ENCODE measurements at regions of chr14 and their contacts with region 1.

Region 1: GRCh38 chr14:22556990-22557623 is 31.9 kb downstream of the DAD1 start:
- DNase-seq: peak; percentile 87
- H3K4me3 Mint-ChIP-seq: peak overlapping the region; percentile 81
- H3K27ac Mint-ChIP-seq: peak overlapping the region; percentile 98
- H3K4me1 Mint-ChIP-seq: peaks cover 88% of the 10 kb centered on the region
- H3K27me3 Mint-ChIP-seq: peaks cover 3% of the 10 kb centered on the region

Region 2: DNA sequence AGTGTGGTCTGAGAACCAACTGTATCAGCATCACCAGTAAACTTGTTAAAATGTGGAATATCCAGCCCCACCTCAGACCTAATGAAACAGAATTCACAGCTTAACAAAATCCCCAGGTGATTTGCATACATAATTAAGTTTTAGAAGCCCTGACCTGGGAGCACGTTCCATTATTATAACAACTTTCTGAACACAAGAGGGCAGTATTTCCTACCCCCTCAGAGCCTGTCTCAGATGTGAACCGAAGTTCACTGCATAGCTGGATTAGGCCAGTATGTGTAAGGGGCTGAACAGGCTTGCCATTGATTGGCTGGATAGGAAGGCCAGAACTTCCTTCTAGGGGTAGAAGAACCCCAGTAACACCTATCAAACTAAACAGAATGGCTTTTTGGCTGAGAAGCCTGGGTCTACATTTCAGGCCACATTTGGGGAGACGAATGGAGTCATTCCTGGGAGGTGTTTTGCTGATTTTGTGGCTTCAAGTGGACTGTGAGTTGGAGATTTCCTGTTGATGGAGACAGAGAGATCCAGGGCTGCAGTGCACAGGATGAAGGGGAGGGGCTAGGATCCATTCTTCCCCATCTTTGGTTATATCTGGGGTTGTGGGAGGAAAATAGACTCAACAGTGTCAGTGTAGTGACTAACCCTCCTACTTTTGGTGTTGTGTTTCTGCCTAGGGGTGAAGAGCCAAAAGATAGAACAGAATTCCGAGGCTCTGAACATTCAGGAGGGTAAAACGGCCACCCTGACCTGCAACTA is 788.8 kb before region 1 on chr14:
- intact Hi-C with region 1: loop called (anchors 5 kb)
- DNase-seq: no peak
- H3K4me3 Mint-ChIP-seq: peak overlapping the region; percentile 67
- H3K27ac Mint-ChIP-seq: peak overlapping the region; percentile 6
- H3K4me1 Mint-ChIP-seq: peaks cover 4% of the 10 kb centered on the region
- H3K27me3 Mint-ChIP-seq: peaks cover 10% of the 10 kb centered on the region

Region 3: DNA sequence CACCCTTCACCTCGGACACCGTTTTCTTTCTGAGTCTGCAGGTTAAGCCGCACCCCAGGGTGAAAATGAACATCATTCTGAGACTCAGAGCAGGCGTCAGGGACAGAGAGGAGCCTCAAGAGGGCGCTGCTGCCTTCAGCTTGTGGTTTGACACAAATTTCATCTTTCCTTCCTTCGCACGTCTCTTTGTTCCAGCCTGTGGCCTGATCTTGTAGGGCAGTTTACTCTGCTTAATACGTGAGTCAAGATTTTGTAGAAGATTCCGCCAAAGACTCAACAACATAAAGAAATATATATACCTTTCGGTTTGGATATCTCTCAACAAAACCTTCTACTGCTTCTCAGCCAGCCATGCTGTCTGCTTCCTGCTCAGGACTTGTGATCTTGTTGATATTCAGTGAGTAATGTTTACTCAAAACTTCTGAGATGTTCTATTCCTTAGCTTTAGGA is 554.2 kb before region 1 on chr14:
- intact Hi-C with region 1: loop called (anchors 5 kb)
- DNase-seq: peak; percentile 66
- H3K4me3 Mint-ChIP-seq: peak overlapping the region; percentile 74
- H3K27ac Mint-ChIP-seq: peak overlapping the region; percentile 86
- H3K4me1 Mint-ChIP-seq: peaks cover 32% of the 10 kb centered on the region
- H3K27me3 Mint-ChIP-seq: no peaks in the 10 kb centered on the region

Region 4: GRCh38 chr14:22221508-22221907 is 335.6 kb before region 1 on chr14:
- intact Hi-C with region 1: loop called (anchors 10 kb)
- DNase-seq: no peak
- H3K4me3 Mint-ChIP-seq: peak overlapping the region; percentile 68
- H3K27ac Mint-ChIP-seq: peak overlapping the region; percentile 38
- H3K4me1 Mint-ChIP-seq: peaks cover 9% of the 10 kb centered on the region
- H3K27me3 Mint-ChIP-seq: no peaks in the 10 kb centered on the region

Region 5: GRCh38 chr14:22570132-22570949 is 13.2 kb after region 1 on chr14:
- intact Hi-C with region 1: loop called (anchors 1 kb)
- DNase-seq: peak; percentile 87
- H3K4me3 Mint-ChIP-seq: peak overlapping the region; percentile 89
- H3K27ac Mint-ChIP-seq: peak overlapping the region; percentile 96
- H3K4me1 Mint-ChIP-seq: peaks cover 70% of the 10 kb centered on the region
- H3K27me3 Mint-ChIP-seq: no peaks in the 10 kb centered on the region

Region 6: GRCh38 chr14:22641846-22642245 is 84.7 kb after region 1 on chr14:
- intact Hi-C with region 1: no loop called
- DNase-seq: no peak
- H3K4me3 Mint-ChIP-seq: no peak overlapping the region
- H3K27ac Mint-ChIP-seq: no peak overlapping the region
- H3K4me1 Mint-ChIP-seq: peaks cover 2% of the 10 kb centered on the region
- H3K27me3 Mint-ChIP-seq: peaks cover 4% of the 10 kb centered on the region

Region 7: GRCh38 chr14:22691171-22691570 is 134.1 kb after region 1 on chr14:
- intact Hi-C with region 1: no loop called
- DNase-seq: no peak
- H3K4me3 Mint-ChIP-seq: no peak overlapping the region
- H3K27ac Mint-ChIP-seq: no peak overlapping the region
- H3K4me1 Mint-ChIP-seq: peaks cover 5% of the 10 kb centered on the region
- H3K27me3 Mint-ChIP-seq: peaks cover 23% of the 10 kb centered on the region

Region 8: DNA sequence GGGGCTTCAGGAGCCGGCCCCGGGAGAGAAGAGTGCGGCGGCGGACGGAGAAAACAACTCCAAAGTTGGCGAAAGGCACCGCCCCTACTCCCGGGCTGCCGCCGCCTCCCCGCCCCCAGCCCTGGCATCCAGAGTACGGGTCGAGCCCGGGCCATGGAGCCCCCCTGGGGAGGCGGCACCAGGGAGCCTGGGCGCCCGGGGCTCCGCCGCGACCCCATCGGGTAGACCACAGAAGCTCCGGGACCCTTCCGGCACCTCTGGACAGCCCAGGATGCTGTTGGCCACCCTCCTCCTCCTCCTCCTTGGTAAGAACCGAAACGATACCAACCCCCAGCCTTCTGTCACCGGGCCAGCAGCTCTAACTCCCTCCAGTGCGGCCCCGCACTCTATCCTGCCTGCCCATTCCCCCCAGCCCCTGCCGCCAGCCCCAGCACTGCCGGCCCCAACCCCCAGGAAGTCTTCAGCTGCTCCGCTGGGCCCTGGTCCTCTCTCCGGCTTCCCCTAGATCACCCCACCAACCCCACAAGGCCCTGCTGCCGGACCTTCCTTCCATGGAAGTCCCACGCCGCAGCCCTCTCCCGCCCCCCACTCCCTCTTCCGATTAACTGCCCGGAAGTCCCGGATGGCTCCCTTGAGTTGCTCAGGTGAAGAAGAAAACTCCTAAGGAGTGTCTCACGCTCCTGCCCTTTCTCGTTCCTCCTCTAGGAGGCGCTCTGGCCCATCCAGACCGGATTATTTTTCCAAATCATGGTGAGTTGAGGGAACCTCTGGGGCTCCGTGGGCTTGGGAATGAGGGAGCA is 315.1 kb after region 1 on chr14:
- intact Hi-C with region 1: loop called (anchors 2 kb)
- DNase-seq: peak; percentile 64
- H3K4me3 Mint-ChIP-seq: peak overlapping the region; percentile 89
- H3K27ac Mint-ChIP-seq: peak overlapping the region; percentile 80
- H3K4me1 Mint-ChIP-seq: peaks cover 19% of the 10 kb centered on the region
- H3K27me3 Mint-ChIP-seq: no peaks in the 10 kb centered on the region

Measured in activated T-helper 2 cell treated with anti-CD3 and anti-CD28 coated beads, Interferon-gamma antibody, Interleukin-2, Interleukin-4, amounts not matched to agents 10 μg/mL and 5 μg/mL and 100 μg/mL, durations not matched to agents 14 hours and 24 hours and 36 hours (primary cell).